Activated CD4-positive, alpha-beta memory T cell treated with anti-CD3 and anti-CD28 coated beads, Interleukin-2, amount 10 ng/mL, durations not matched to agents 7 days and 5 days (primary cell): ENCODE measurements at regions of chr22 and their contacts with region 1.

Region 1: DNA sequence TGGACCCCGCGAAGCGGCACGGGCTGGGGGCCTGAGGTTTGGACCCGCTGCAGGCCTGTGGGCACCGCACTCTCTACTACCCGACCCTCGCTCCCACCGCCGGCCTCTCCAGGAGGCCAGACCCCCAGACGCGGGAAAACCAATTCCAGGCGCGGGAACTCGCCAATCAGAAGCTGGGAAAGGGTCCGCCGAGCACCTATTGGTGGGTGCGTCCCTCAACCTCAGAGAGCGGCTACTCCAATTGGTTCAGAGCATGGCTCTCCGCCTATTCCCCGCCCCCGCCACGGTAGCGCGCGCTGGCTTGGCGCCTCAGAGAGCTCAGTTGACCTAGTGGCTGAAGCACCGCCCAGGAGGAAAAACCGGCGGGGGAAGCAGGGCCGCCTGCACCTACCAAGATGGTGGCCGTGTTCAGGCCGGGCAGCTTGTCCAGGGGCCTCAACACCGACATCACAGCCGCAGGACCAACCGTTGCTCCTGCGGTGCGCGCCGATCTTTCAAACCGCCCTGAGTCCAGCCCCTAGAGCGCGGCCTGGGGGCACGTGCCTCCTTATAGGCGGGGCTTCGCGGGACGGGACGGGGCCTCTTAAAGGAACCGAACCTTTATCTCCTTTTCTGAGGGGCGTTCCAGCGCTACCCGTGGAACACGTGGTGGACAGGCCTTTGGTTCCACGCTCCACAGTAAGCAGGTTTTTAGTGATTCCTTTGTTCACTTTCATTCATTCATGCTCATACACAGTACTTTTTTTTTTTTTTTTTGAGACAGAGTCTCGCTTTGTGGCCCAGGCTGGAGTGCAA is at the start of gene CENPM:
- DNase-seq: peak; percentile 94
- H3K4me3 Mint-ChIP-seq: peak within 1 kb of the TSS; percentile 88
- H3K27ac Mint-ChIP-seq: peak within 1 kb of the TSS; percentile 85
- H3K4me1 Mint-ChIP-seq: peaks cover 55% of the 10 kb centered on the region
- H3K27me3 Mint-ChIP-seq: no peaks in the 10 kb centered on the region
- total RNA-seq, gene CENPM: 71.8 to 81.2 TPM

Region 2: GRCh38 chr22:41621099-41621910 is 325.5 kb before region 1 on chr22 and contains the start of gene XRCC6:
- CTCF ChIA-PET with region 1: no interaction called
- POLR2A ChIA-PET with region 1: interaction called, 16 read pairs
- DNase-seq: peak; percentile 100
- H3K4me3 Mint-ChIP-seq: peak within 1 kb of the TSS; percentile 99
- H3K27ac Mint-ChIP-seq: peak within 1 kb of the TSS; percentile 97
- H3K4me1 Mint-ChIP-seq: peaks cover 46% of the 10 kb centered on the region
- H3K27me3 Mint-ChIP-seq: no peaks in the 10 kb centered on the region
- total RNA-seq, gene XRCC6: 244 to 251 TPM

Region 3: DNA sequence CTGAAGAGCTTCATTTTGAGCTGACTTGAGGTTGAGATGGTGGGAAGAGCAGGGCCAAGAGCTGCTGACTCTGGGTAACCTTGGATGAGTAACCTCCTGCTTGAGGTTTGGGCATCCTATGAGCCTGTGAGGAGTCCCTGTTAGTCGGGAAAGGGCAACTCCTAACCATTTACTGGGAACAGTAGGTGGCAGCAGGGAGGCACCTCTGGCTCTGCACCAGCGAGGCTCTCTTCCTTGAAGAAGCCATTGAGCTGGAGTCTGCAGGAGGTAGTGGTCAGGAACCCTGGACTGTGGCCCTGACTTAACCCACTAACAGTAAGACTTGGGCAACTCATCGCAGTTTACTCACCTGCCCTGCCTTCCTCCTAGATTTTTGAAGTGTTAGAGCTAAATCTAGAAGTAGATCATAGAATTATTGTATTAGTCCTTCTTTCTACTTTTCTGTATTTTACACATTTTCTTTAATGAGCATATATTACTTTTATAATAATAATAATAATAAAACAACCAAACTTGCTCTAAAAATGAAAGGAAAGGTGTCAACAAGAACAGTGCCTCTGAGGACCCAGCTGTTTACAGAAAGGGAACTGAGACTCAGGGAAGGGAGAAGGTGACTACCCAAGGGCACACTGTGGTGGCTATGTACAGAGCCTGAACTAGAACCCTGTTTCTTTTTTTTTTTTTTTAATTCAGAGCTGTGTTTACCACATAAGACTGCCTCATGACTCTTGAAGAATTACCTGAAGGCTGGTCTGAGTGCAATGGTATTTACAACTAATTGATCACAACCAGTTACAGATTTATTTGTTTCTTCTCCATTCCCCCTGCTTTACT is 200.0 kb before region 1 on chr22:
- CTCF ChIA-PET with region 1: interaction called, 12 read pairs
- POLR2A ChIA-PET with region 1: no interaction called
- DNase-seq: peak; percentile 58
- H3K4me3 Mint-ChIP-seq: no peak overlapping the region
- H3K27ac Mint-ChIP-seq: no peak overlapping the region
- H3K4me1 Mint-ChIP-seq: peaks cover 11% of the 10 kb centered on the region
- H3K27me3 Mint-ChIP-seq: peaks cover 18% of the 10 kb centered on the region

Region 4: DNA sequence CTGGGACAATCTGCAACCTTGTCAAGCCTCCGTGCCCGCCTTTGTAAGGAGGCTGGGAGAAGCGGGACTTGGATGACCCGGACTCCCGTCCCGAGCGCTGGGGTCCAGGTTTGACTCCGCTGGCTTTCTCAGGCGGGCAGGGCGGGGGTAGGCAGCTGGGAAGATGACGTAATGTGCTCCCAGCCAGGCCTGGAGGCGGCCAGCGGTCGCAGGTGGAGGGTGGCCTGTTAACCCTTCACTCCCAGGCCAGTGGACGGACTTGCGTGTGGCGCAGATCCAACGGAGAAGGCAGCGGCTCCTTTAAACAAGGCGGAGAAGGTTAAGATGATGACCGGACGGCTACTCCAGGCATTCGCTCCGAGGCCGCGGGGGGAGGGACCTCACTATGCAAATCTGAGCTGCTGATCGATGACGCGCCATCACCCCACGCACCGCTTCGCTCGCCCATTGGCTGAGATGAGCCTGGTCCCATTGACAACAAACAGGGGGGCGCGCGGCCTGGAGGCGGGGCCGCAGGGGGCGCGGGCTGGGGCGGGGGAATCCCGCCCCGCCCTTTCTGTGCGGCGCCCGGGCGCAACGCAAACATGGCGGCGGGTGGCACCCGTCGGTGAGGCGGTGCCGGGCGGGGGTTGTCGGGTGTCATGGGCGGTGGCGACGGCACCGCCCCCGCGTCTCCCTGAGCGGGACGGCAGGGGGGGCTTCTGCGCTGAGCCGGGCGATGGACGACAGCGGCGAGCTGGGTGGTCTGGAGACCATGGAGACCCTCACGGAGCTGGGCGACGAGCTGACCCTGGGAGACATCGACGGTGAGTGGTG is 114.1 kb before region 1 on chr22 and contains the start of gene SREBF2:
- CTCF ChIA-PET with region 1: interaction called, 7 read pairs
- POLR2A ChIA-PET with region 1: interaction called, 39 read pairs
- DNase-seq: peak; percentile 100
- H3K4me3 Mint-ChIP-seq: peak within 1 kb of the TSS; percentile 92
- H3K27ac Mint-ChIP-seq: peak within 1 kb of the TSS; percentile 96
- H3K4me1 Mint-ChIP-seq: peaks cover 50% of the 10 kb centered on the region
- H3K27me3 Mint-ChIP-seq: no peaks in the 10 kb centered on the region
- total RNA-seq, gene SREBF2: 150 to 157 TPM

Region 5: DNA sequence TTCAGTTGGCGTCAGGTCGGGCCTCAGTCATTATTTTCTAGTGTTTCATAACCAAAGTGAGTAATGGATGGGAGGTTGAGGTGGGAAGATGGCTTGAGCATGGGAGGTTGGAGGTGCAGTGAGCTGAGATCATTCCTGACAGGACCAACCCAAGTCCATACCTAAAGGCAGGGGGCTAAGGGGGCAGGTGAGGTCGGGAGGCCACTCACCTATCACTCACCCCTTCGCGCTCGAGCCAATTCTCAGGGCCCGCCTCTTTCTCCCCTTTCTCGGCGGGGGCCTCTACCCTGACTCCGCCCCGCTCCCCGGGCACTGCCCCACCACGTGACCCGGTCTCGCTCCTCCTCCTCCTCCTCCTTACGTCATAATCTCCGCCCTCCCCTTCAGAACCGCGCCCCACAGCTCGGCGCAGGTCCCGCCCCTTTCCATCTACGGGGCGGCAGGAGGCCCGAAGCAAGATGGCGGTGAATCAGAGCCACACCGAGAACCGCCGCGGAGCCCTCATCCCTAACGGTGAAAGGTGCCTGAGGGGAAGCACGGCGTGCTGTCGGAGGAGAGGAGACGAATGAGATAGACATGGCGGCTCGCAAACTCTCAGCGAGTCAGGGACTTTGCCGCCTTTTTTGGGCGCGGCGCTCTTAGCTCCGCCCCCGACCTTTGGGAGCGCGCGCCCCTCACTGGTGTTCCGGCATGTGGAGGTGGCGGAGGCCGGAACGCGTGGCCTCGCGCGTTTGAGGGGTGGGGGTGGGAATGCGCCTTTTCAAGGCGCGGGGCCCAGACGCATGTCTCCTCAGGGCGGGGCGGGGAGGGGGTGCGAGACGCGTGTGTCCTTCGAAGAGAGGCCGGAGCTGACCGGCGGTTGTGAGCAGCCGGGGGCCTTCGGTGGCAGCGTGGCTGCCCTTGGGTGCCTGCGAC is 51.8 kb after region 1 on chr22 and contains the start of gene WBP2NL:
- CTCF ChIA-PET with region 1: interaction called, 4 read pairs
- POLR2A ChIA-PET with region 1: interaction called, 11 read pairs
- DNase-seq: peak; percentile 92
- H3K4me3 Mint-ChIP-seq: peak within 1 kb of the TSS; percentile 98
- H3K27ac Mint-ChIP-seq: peak within 1 kb of the TSS; percentile 88
- H3K4me1 Mint-ChIP-seq: peaks cover 35% of the 10 kb centered on the region
- H3K27me3 Mint-ChIP-seq: peaks cover 2% of the 10 kb centered on the region
- total RNA-seq, gene WBP2NL: 2.0 to 2.3 TPM

Region 6: DNA sequence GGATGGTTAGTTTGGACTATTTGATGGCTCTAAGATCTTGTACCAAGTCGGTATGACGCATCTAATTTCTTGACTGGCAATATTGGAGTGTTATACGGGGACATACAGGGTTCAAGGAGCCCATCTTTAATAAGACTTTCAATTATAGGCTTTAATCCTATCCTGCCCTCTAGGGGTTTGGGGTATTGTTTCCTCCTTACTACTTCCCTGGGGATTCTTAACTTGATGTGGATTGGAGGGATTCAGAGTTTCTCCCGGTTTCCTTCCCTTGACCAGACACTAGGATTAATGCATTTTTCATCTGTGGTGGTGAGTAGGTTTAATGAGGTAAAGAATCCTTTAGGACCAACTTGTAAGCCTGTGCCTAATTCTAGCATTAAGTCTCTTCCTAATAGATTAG is 165.0 kb after region 1 on chr22:
- CTCF ChIA-PET with region 1: no interaction called
- POLR2A ChIA-PET with region 1: no interaction called
- DNase-seq: no peak
- H3K4me3 Mint-ChIP-seq: no peak overlapping the region
- H3K27ac Mint-ChIP-seq: no peak overlapping the region
- H3K4me1 Mint-ChIP-seq: peaks cover 3% of the 10 kb centered on the region
- H3K27me3 Mint-ChIP-seq: no peaks in the 10 kb centered on the region

Region 7: DNA sequence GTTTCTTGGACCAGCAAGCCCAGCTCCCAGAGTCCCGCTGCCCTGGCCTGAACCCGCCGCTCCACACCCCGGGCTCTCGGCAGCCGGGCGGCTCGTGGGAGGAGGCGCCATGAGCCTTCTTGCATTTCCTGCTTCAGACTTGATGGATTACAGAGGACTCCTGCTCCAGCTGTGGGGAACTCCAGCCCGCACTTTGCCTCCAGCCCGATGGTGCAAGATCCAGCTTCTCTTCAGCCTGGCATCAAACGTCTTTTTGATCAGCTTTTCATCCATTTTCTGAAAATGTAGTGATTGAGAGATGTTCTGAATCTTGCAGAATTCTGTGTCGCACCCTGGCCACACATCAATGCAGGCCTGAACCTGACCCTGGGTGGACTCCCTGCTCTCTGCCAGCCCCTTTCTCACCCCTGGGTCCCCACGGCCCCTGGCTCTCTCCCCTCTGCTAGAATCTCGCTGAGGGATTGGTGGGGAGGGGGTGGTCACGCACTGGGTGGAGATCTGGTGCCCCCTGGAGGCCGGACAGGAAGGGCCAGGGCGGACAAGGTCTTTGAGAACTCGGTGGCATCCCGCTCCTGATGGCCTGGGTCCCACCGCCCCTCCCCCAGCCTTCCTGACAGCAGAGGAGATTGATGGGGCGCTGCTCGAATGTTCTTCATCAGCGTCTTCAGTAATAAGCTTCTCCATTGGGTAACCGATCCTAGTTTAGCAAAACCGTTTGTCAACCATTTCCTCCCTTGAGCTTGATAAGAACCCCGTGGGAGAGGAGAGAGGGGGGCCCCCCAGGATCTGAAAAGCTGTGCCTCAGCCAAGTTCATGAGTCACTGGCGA is 497.5 kb after region 1 on chr22:
- CTCF ChIA-PET with region 1: interaction called, 16 read pairs
- POLR2A ChIA-PET with region 1: interaction called, 9 read pairs
- DNase-seq: peak; percentile 85
- H3K4me3 Mint-ChIP-seq: peak overlapping the region; percentile 64
- H3K27ac Mint-ChIP-seq: peak overlapping the region; percentile 69
- H3K4me1 Mint-ChIP-seq: peaks cover 31% of the 10 kb centered on the region
- H3K27me3 Mint-ChIP-seq: peaks cover under 1% of the 10 kb centered on the region